ENCODE measurements at regions of chr12 and their contacts with region 1.

Region 1: DNA sequence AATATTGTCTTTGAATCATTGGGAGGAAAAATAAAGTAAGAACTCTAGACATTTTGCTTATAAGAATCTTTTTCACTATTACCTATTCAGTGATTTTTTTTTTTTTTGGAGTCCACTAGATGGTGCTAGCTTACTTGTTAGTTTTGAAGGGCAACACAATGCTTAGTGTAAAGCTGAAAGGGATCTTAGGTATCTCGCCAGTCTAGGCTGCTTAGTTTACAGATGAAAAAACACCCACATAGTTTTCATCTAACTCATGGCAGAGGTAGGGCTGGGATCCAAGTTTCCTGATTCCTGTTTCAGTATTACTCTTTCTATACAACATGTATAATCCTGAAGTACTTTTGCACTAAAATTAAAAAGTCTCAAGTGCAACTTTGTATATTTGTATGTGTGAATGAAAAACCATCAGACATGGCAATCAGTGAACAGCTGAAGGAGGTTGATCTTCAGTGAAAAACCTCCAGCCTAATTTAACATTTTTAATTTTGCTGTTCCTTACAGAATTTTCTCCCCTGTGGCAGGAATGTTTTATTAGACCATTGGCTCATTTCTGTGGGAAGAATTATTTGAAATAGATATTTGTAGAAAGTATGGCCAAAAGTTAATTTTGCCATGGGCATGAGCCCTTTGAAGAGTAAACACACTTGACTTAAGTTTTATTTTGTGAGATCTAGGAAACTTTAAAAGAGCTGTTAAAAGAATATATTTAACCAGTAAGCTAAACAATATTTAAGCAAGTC is 40.7 kb downstream of the LRRIQ1 start:
- DNase-seq: no peak
- H3K4me3 Mint-ChIP-seq: no peak overlapping the region
- H3K27ac Mint-ChIP-seq: no peak overlapping the region
- H3K4me1 Mint-ChIP-seq: no peaks in the 10 kb centered on the region
- H3K27me3 Mint-ChIP-seq: no peaks in the 10 kb centered on the region

Region 2: GRCh38 chr12:85424581-85425348 is 347.9 kb after region 1 on chr12:
- CTCF ChIA-PET with region 1: no interaction called
- POLR2A ChIA-PET with region 1: no interaction called
- intact Hi-C with region 1: loop called (anchors 10 kb)
- DNase-seq: peak; percentile 10
- H3K4me3 Mint-ChIP-seq: no peak overlapping the region
- H3K27ac Mint-ChIP-seq: no peak overlapping the region
- H3K4me1 Mint-ChIP-seq: no peaks in the 10 kb centered on the region
- H3K27me3 Mint-ChIP-seq: no peaks in the 10 kb centered on the region

Region 3: DNA sequence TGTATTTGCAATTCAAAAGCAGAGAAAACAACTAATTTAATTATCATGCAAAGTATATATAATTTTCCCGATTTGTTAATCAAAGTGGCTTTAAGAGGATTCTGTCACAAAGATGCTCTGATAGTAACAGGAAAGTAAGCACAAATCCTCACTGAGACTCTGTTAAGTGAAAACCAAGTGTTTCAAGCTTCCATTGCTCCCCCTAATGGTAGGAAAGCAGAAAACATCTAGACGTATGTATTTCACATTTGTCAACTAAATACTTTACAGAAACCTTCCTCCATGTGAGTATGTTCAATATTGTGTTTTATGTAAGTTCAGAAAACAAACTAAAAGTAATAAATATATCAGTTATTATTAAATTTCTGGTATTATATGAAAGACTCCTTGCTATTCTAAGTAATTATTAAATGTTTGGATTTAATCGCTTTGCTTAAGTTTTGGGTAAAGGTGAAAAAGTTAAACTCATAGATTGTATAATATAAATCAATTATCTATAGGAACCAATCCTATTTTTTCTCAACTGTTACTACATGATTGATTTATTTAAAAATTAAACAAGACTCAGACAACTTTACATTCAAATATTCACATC is 795.7 kb after region 1 on chr12:
- CTCF ChIA-PET with region 1: no interaction called
- POLR2A ChIA-PET with region 1: no interaction called
- intact Hi-C with region 1: loop called (anchors 5 kb)
- DNase-seq: no peak
- H3K4me3 Mint-ChIP-seq: no peak overlapping the region
- H3K27ac Mint-ChIP-seq: no peak overlapping the region
- H3K4me1 Mint-ChIP-seq: no peaks in the 10 kb centered on the region
- H3K27me3 Mint-ChIP-seq: no peaks in the 10 kb centered on the region

Region 4: GRCh38 chr12:85920324-85920947 is 843.6 kb after region 1 on chr12:
- CTCF ChIA-PET with region 1: interaction called, 4 read pairs
- POLR2A ChIA-PET with region 1: no interaction called
- intact Hi-C with region 1: loop called (anchors 2 kb)
- DNase-seq: no peak
- H3K4me3 Mint-ChIP-seq: no peak overlapping the region
- H3K27ac Mint-ChIP-seq: no peak overlapping the region
- H3K4me1 Mint-ChIP-seq: no peaks in the 10 kb centered on the region
- H3K27me3 Mint-ChIP-seq: no peaks in the 10 kb centered on the region

Measured in activated CD4-positive, alpha-beta memory T cell treated with anti-CD3 and anti-CD28 coated beads for 36 hours (primary cell).